ENCODE measurements at regions of chr11 and their contacts with region 1.

Region 1: DNA sequence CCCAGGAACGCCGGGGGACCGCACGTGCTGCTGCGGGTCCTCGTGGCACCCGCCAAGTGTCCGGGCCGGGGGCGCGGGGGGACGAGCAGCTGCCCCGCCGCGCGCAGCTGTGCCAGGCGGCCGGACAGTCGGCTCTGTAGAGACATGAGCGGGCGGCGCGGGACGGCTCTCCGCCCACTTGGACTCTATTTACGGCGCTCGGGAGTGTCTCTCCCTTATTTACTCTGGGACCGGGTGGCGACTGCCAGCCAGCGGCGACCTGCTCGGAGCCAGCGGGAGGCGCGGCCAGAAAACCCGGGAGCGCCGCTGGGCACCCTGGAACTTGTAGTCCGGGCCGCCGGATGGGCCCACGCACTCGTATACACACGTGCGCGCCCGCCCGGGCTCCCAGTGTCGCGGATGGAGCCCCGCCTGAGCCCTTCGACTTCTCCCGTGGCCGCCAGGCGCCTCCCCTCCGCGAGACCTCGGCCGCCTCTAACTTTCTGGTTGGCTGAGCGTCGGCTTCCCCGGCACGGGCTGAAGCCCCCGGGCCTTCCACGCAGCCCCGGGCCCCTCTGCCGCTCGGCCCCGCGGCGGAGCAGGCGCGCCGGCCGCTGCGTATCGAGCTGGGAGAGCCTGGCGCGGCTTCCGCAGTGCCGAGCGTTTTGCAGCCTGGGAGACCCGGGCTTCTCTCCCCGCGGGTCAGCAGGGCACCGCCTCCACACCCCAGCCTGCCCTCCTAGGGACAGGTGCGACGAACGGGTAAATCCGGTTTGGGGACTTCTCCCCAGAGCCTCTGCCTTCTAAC is at the start of gene MACROD1:
- DNase-seq: peak; percentile 69
- H3K4me3 ChIP-seq: peak within 1 kb of the TSS; percentile 63
- H3K27ac ChIP-seq: no peak within 1 kb of the TSS
- H3K27me3 ChIP-seq: no peaks in the 10 kb centered on the region
- CTCF ChIP-seq: no peak

Region 2: DNA sequence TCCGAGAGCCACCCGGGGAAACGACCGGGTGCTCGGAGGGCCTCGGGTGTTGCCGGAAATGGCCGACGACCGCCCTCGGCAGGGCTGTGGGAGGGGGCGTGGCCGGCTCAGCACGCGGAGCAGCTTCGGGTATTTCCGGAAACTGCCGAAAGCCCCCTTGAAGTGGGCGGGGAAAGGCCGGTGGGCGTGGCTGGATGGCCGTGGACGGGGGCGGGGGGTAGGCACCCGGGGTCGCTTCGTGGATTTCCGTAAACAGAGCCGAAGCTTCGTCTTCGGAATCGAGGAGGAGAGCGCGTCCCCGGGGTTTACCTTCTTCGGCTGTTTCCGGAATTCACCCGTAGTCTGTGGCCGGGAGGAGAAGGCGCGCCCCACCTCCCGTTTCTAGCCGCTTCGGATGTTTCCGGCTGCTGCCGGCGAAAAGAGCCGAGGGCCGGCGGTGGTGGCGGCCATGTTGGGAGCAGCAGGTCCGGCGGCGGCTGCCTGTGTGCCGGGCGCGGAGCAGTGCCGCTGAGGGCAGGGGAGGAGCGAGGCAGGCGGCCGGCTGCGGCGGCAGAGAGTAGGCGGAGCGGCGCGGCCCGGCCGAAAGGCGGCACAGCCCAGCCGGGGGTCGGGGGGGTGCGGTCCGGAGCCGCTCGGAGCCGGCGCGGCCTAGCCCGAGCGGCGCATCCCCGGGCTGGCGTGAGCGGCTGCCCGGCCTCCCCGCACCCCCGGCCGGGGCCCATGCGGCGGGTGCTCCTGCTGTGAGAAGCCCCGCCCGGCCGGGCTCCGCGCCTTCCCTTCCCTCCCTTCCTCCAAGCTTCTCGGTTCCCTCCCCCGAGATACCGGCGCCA is 327.1 kb before region 1 on chr11 and contains the start of gene MARK2:
- in situ Hi-C with region 1: loop called (anchors 25 kb)
- DNase-seq: peak; percentile 95
- H3K4me3 ChIP-seq: peak within 1 kb of the TSS; percentile 92
- H3K27ac ChIP-seq: peak within 1 kb of the TSS; percentile 60
- H3K27me3 ChIP-seq: no peaks in the 10 kb centered on the region
- CTCF ChIP-seq: no peak

Measured in brain microvascular endothelial cell (primary cell).